Motor neuron (in vitro differentiated cells): ENCODE measurements at regions of chr6 and their contacts with region 1.

Region 1: DNA sequence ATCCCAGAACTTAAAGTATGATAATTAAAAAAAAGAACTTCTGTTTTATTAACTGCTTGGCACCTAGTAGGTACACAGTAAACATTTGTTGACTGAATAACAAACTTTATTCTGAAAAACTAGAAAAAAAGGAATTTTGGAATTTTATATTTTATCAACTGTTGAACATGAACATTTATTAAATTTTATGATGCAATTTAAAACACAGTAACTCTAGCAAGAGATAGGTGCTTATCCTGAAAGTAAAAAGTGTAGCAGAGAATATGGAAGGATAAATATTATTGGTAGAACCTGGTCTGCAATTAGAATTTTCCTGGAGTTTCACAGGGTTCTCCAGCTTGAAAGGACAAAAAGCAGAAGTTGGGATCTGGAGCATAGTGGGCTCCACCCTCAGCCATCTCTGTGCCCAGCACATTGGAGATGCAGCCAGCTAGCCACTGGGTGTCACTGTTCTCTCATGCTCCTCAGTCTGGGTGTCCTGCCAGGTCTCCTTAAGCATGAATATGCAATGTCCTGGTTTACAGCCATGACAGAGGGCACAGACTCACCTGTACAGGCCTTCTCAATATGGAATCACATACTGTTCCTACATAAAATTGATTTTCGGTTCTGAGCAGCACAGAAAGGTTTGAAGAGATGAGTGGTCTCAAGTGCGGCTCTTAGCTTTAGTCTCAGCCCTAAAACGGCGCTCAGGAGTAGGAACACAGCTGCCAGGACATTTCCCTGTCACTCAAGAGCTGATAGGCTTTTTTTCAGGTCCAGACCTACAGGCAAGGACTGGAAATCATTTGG is 31.7 kb upstream of the IL20RA start:
- ATAC-seq: peak; percentile 64 to 100 (median 88)
- H3K4me3 ChIP-seq: no peak overlapping the region
- H3K27ac ChIP-seq: no peak overlapping the region
- H3K4me1 ChIP-seq: no peaks in the 10 kb centered on the region

Region 2: DNA sequence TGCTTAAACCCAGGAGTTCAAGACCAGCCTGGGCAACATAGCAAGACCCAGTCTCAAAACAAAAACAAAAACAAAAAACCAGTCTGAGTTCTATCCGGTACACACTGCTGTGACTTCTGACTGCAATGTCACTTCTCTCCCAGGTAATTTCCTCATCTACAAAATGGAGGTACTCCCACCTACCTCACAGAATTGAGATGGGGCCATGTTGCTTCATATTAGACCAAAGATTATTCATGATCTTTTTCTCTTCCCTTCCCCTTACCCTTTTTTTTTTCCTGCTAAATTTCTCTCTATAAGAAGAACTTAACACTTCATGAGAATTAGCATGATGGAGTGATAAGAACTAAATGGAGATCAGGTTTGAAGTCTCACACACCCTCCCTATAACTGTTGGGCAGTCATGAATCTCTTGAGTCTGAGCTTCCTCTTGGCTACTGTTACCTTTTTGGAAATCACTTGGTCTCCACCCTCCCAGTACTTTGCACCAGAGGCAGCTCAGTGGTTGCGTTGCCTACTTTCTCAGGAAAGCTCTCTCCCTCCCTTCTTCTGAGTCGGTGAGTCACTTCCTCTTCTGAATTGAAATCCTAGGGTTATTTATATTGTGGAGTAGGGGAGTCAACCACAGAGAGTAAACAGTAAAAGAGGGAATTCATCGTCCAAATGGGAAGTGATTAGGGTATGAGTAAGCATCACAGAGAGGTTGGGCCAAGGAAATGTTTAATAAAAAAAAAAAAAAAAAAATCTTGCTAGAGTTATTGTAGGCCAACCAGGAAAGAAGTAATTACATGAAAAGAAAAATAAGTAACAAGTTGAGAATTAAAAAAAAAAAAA is 466.4 kb before region 1 on chr6:
- in situ Hi-C with region 1: no loop called
- ATAC-seq: peak in 7 of 8 experiments; percentile 30 to 99 (median 93)
- H3K4me3 ChIP-seq: no peak overlapping the region
- H3K27ac ChIP-seq: no peak overlapping the region
- H3K4me1 ChIP-seq: no peaks in the 10 kb centered on the region

Region 3: GRCh38 chr6:137013738-137014602 is 62.5 kb before region 1 on chr6:
- in situ Hi-C with region 1: no loop called
- ATAC-seq: peak in 4 of 8 experiments; percentile 79 to 95 (median 90)
- H3K4me3 ChIP-seq: no peak overlapping the region
- H3K27ac ChIP-seq: no peak overlapping the region
- H3K4me1 ChIP-seq: no peaks in the 10 kb centered on the region

Region 4: DNA sequence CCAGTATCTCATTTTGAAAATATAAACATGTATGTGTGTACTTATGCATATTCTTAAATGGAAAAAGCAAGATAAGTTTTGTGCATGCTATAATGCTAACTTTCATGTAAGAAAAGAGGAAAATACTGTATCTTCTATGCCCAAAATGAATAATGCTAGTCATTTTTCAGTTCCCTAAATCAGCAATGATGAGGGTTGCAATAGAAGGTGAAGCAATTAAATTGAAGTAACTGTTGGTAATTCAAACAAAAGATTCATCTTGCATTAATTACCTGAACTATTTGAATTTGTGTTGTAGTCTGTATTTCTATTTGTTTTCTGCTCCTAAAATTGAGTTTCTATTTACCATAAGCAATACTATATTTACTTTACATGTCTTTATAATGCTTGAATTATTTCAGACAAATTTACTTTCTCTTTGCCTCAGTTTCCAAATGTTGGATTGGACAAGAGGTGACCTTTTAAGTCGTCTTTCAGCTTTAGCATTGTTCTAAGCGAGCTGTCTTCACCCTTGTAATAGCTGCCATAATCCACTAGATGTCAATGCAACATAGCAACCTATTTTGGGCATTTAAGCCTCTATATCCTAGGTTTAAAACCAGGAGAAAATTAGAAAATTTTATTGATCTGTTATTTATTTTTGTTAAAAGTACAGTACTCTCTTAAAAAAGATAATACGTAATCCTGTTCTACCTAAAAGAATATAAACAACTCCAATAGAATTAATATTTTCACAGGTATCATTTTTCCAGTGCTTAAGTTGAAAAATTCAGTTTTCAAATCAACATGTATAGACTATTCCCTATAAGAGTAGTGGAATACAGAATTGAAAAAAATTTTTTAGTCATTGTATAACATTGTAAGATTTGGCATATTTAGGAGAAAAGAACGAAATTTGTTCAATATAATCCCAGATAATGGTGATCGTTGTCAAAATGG is 195.0 kb after region 1 on chr6:
- in situ Hi-C with region 1: loop called in 1 of 9 experiments (anchors 25 kb)
- ATAC-seq: peak in 6 of 8 experiments; percentile 39 to 76 (median 58)
- H3K4me3 ChIP-seq: no peak overlapping the region
- H3K27ac ChIP-seq: no peak overlapping the region
- H3K4me1 ChIP-seq: no peaks in the 10 kb centered on the region